ENCODE measurements at regions of chr2 and their contacts with region 1.

Region 1: GRCh38 chr2:230614913-230615332 is 97.7 kb upstream of the CAB39 start:
- DNase-seq: peak; percentile 84
- ATAC-seq: peak; percentile 85
- H3K4me3 ChIP-seq: peak overlapping the region in 2 of 5 experiments; percentile 12 to 18
- H3K4me3 Mint-ChIP-seq: peak overlapping the region; percentile 75
- H3K27ac ChIP-seq: peak overlapping the region; percentile 0 to 46
- H3K27ac Mint-ChIP-seq: peak overlapping the region; percentile 86
- H3K4me1 ChIP-seq: peaks cover 27 to 42% of the 10 kb centered on the region in 2 donors
- H3K4me1 Mint-ChIP-seq: peaks cover 42% of the 10 kb centered on the region
- H3K27me3 ChIP-seq: no peaks in the 10 kb centered on the region
- H3K27me3 Mint-ChIP-seq: no peaks in the 10 kb centered on the region
- CTCF ChIP-seq: no peak

Region 2: GRCh38 chr2:229836847-229837246 is 778.1 kb before region 1 on chr2:
- CTCF ChIA-PET with region 1: no interaction called
- POLR2A ChIA-PET with region 1: interaction called, 11 read pairs
- intact Hi-C with region 1: no loop called
- DNase-seq: no peak
- ATAC-seq: no peak
- H3K4me3 ChIP-seq: no peak overlapping the region
- H3K4me3 Mint-ChIP-seq: no peak overlapping the region
- H3K27ac ChIP-seq: no peak overlapping the region
- H3K27ac Mint-ChIP-seq: no peak overlapping the region
- H3K4me1 ChIP-seq: no peaks in the 10 kb centered on the region
- H3K4me1 Mint-ChIP-seq: peaks cover 10% of the 10 kb centered on the region
- H3K27me3 ChIP-seq: no peaks in the 10 kb centered on the region
- H3K27me3 Mint-ChIP-seq: no peaks in the 10 kb centered on the region
- CTCF ChIP-seq: no peak

Region 3: GRCh38 chr2:230225486-230225885 is 389.4 kb before region 1 on chr2 and contains the start of gene SP140:
- CTCF ChIA-PET with region 1: no interaction called
- POLR2A ChIA-PET with region 1: no interaction called
- intact Hi-C with region 1: loop called (anchors 5 kb)
- DNase-seq: peak; percentile 91
- ATAC-seq: peak; percentile 77
- H3K4me3 ChIP-seq: peak within 1 kb of the TSS; percentile 51 to 96 (median 72)
- H3K4me3 Mint-ChIP-seq: peak within 1 kb of the TSS; percentile 88
- H3K27ac ChIP-seq: peak within 1 kb of the TSS; percentile 86 to 87
- H3K27ac Mint-ChIP-seq: peak within 1 kb of the TSS; percentile 96
- H3K4me1 ChIP-seq: peaks cover 58 to 74% of the 10 kb centered on the region in 2 donors
- H3K4me1 Mint-ChIP-seq: peaks cover 76% of the 10 kb centered on the region
- H3K27me3 ChIP-seq: no peaks in the 10 kb centered on the region
- H3K27me3 Mint-ChIP-seq: no peaks in the 10 kb centered on the region
- CTCF ChIP-seq: no peak
- total RNA-seq, gene SP140: 411 and 424 TPM in 2 replicates

Region 4: GRCh38 chr2:230441227-230441897 is 173.6 kb before region 1 on chr2:
- CTCF ChIA-PET with region 1: no interaction called
- POLR2A ChIA-PET with region 1: no interaction called
- intact Hi-C with region 1: loop called (anchors 2 kb)
- DNase-seq: peak; percentile 58
- ATAC-seq: peak; percentile 84
- H3K4me3 ChIP-seq: peak overlapping the region in 3 of 5 experiments; percentile 0 to 45 (median 9)
- H3K4me3 Mint-ChIP-seq: peak overlapping the region; percentile 56
- H3K27ac ChIP-seq: peak overlapping the region; percentile 73 to 80
- H3K27ac Mint-ChIP-seq: peak overlapping the region; percentile 94
- H3K4me1 ChIP-seq: peaks cover 52 to 67% of the 10 kb centered on the region in 2 donors
- H3K4me1 Mint-ChIP-seq: peaks cover 71% of the 10 kb centered on the region
- H3K27me3 ChIP-seq: no peaks in the 10 kb centered on the region
- H3K27me3 Mint-ChIP-seq: no peaks in the 10 kb centered on the region
- CTCF ChIP-seq: no peak

Region 5: DNA sequence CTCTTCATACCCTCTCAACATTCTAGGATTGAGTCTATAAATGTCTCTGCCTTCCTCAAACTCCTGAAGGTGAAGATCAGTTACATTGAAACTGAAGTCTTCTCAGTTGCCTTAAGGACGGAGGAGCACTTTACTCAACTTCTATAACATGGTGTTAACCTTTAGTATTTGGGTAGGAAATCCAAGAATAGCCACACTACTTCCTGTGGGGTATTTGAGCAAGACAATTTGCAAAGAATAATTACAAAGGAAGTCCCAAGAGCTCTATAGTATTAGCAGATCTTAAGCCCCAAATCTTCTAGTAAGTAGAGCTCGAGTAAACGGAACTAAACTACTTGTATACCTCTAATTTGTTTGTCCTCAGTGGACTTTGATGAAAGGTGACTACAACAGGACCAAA is 118.0 kb before region 1 on chr2:
- CTCF ChIA-PET with region 1: interaction called, 6 read pairs
- POLR2A ChIA-PET with region 1: interaction called, 3 read pairs
- intact Hi-C with region 1: loop called (anchors 2 kb)
- DNase-seq: peak; percentile 32
- ATAC-seq: peak; percentile 68
- H3K4me3 ChIP-seq: peak overlapping the region in 2 of 5 experiments; percentile 19 to 57
- H3K4me3 Mint-ChIP-seq: peak overlapping the region; percentile 85
- H3K27ac ChIP-seq: peak overlapping the region; percentile 67 to 83
- H3K27ac Mint-ChIP-seq: peak overlapping the region; percentile 97
- H3K4me1 ChIP-seq: peaks cover 28 to 37% of the 10 kb centered on the region in 2 donors
- H3K4me1 Mint-ChIP-seq: peaks cover 58% of the 10 kb centered on the region
- H3K27me3 ChIP-seq: no peaks in the 10 kb centered on the region
- H3K27me3 Mint-ChIP-seq: no peaks in the 10 kb centered on the region
- CTCF ChIP-seq: no peak

Region 6: GRCh38 chr2:230602562-230603230 is 12.2 kb before region 1 on chr2:
- CTCF ChIA-PET with region 1: interaction called, 17 read pairs
- POLR2A ChIA-PET with region 1: interaction called, 6 read pairs
- intact Hi-C with region 1: no loop called
- DNase-seq: peak; percentile 83
- ATAC-seq: peak; percentile 84
- H3K4me3 ChIP-seq: peak overlapping the region in 3 of 5 experiments; percentile 9 to 31 (median 19)
- H3K4me3 Mint-ChIP-seq: peak overlapping the region; percentile 78
- H3K27ac ChIP-seq: peak overlapping the region; percentile 99
- H3K27ac Mint-ChIP-seq: peak overlapping the region; percentile 99
- H3K4me1 ChIP-seq: peaks cover 72% of the 10 kb centered on the region in 2 donors
- H3K4me1 Mint-ChIP-seq: peaks cover 83% of the 10 kb centered on the region
- H3K27me3 ChIP-seq: no peaks in the 10 kb centered on the region
- H3K27me3 Mint-ChIP-seq: no peaks in the 10 kb centered on the region
- CTCF ChIP-seq: no peak

Measured in B cell (primary cell).